ENCODE measurements at regions of chr20 and their contacts with region 1.

Region 1: DNA sequence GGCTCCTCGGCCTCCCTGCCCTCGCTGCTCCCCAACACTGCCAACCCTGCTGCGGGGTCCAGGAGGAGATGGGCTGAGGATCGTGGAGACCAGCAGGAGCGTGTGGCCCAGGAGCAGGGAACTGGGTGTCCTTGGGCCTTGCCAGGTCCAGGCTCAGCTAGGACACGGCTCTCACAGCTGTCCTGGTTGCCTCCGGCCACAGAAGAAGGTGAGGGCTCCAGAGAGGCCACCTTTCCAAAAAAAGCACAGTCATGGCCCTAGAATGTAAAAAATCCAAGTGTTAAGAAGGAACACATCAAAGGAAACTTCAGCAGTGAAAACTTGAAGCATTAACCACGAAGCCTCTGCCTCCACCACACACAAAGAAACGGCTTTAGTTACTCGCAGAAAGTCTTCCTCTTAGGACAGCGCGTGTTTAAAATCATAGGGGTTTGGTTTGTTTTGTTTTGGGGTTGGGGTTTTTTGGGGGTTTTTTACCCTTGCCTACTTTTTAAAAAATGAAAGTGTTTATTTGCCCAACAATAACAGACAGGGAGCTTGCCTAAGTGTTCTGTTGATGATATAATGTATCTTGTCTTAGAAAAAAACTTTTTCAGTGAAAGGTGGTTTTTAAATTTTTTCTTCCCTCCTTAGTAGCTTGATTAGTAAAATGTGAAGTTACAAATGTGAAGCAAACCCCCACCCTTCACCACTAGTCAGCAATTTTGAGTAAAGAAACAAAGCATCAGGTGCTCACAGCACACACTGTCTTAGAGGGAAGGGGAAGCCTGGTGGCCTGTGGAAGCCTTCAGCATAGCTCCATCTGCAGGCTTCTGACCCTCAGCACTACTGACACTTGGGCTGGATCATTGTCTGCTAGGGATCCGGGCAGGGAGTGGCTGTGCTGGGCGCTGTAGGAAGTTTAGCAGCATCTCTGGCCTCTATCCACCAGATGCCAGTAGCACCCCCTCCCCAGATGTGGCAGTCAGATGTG is 60.0 kb downstream of the PTPN1 start:
- DNase-seq: peak; percentile 20
- ATAC-seq: peak; percentile 90
- H3K4me3 Mint-ChIP-seq: peak overlapping the region; percentile 46
- H3K27ac Mint-ChIP-seq: peak overlapping the region; percentile 87
- H3K4me1 Mint-ChIP-seq: peaks cover 70% of the 10 kb centered on the region
- H3K27me3 Mint-ChIP-seq: no peaks in the 10 kb centered on the region
- CTCF ChIP-seq: no peak

Region 2: GRCh38 chr20:50198180-50198666 is 371.9 kb before region 1 on chr20:
- CTCF ChIA-PET with region 1: no interaction called
- POLR2A ChIA-PET with region 1: no interaction called
- intact Hi-C with region 1: no loop called
- DNase-seq: no peak
- ATAC-seq: no peak
- H3K4me3 Mint-ChIP-seq: no peak overlapping the region
- H3K27ac Mint-ChIP-seq: no peak overlapping the region
- H3K4me1 Mint-ChIP-seq: peaks cover 17% of the 10 kb centered on the region
- H3K27me3 Mint-ChIP-seq: no peaks in the 10 kb centered on the region
- CTCF ChIP-seq: no peak

Region 3: GRCh38 chr20:50471204-50471610 is 98.9 kb before region 1 on chr20:
- CTCF ChIA-PET with region 1: interaction called, 3 read pairs
- POLR2A ChIA-PET with region 1: interaction called, 10 read pairs
- intact Hi-C with region 1: no loop called
- DNase-seq: no peak
- ATAC-seq: no peak
- H3K4me3 Mint-ChIP-seq: no peak overlapping the region
- H3K27ac Mint-ChIP-seq: no peak overlapping the region
- H3K4me1 Mint-ChIP-seq: peaks cover 38% of the 10 kb centered on the region
- H3K27me3 Mint-ChIP-seq: no peaks in the 10 kb centered on the region
- CTCF ChIP-seq: no peak

Region 4: DNA sequence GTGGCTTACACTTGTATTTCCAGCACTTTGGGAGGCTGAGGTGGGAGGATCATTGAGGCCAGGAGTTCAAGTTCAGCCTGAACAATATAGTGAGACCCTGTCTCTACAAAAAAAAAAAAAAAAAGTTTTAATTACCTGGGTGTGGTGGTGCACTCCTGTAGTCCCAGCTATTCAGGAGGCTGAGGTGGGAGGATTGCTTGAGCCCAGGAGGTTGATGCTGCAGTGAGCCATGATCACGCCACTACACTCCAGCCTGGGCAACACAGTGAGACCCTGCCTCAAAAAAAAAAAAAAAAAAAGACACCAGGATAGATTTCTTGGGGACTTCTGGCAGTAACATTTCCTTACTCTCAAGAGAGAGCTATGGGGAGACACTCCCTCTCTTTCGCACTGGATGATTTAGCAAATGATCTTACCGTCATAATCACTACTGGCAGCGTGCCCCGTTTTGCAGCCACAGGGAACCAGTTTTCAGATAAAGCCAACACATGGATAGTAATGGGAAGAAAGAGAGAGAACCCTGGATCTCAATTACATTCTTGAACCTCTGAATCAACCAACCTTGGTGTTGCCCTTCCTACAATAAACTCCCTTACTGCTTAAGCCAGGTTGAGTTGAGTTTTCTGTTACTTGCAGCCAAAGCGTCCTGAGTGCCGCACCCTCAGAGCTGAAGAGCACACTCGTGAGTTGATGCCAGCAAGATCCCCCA is 78.1 kb before region 1 on chr20:
- CTCF ChIA-PET with region 1: interaction called, 4 read pairs
- POLR2A ChIA-PET with region 1: interaction called, 1,679 read pairs
- intact Hi-C with region 1: no loop called
- DNase-seq: no peak
- ATAC-seq: no peak
- H3K4me3 Mint-ChIP-seq: no peak overlapping the region
- H3K27ac Mint-ChIP-seq: no peak overlapping the region
- H3K4me1 Mint-ChIP-seq: peaks cover 43% of the 10 kb centered on the region
- H3K27me3 Mint-ChIP-seq: no peaks in the 10 kb centered on the region
- CTCF ChIP-seq: no peak

Region 5: DNA sequence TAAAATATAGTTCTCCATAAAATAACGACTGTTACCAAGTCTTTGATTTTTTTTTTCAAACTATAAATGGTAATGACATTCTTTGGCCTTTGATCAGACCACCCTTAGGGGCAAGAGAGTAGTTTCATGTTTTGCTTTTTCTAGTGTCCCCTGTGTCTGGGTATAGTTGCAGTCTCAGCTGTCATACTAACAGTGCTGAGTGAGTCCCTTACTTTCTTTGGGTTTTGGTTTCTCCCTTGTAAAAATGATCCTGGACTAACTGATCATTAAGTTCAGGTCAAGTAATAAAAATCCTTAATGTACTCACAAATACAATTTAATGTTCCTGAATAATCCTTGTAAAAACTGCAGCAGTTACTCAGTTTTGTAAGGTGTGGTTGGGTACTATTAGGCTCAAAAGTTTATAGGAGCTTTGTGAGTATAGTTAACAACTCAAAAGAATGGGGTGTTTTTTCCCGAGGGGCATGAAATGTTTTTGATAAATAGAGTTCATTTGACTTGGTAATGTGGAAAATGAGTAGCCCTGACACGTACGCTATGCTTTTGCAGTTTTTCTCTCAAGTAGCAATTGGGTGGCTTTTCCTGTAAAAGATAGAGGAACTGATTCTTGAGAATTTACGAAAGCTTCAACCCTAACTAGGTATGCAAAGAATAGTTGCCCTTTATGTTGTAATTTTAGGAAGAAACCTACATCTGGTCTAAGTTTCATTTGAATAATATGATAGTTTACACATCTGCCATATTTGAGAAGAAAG is 53.8 kb before region 1 on chr20:
- CTCF ChIA-PET with region 1: interaction called, 16 read pairs
- POLR2A ChIA-PET with region 1: interaction called, 1,679 read pairs
- intact Hi-C with region 1: loop called (anchors 1 kb)
- DNase-seq: no peak
- ATAC-seq: peak; percentile 78
- H3K4me3 Mint-ChIP-seq: peak overlapping the region; percentile 90
- H3K27ac Mint-ChIP-seq: peak overlapping the region; percentile 96
- H3K4me1 Mint-ChIP-seq: peaks cover 95% of the 10 kb centered on the region
- H3K27me3 Mint-ChIP-seq: no peaks in the 10 kb centered on the region
- CTCF ChIP-seq: no peak

Measured in activated B cell treated with CpG ODN at 0.5 μM for 24 hours (primary cell).